AG04450 (cell line): ENCODE measurements at regions of chr9 and their contacts with region 1.

Region 1: GRCh38 chr9:137578518-137579258 is at the start of gene DPH7:
- DNase-seq: peak; percentile 63
- H3K4me3 ChIP-seq: peak within 1 kb of the TSS; percentile 91
- H3K27ac ChIP-seq: peak within 1 kb of the TSS; percentile 75
- H3K27me3 ChIP-seq: no peaks in the 10 kb centered on the region
- CTCF ChIP-seq: peak; percentile 82
- polyA plus RNA-seq, gene DPH7: 19.5 and 21.9 TPM in 2 replicates

Region 2: DNA sequence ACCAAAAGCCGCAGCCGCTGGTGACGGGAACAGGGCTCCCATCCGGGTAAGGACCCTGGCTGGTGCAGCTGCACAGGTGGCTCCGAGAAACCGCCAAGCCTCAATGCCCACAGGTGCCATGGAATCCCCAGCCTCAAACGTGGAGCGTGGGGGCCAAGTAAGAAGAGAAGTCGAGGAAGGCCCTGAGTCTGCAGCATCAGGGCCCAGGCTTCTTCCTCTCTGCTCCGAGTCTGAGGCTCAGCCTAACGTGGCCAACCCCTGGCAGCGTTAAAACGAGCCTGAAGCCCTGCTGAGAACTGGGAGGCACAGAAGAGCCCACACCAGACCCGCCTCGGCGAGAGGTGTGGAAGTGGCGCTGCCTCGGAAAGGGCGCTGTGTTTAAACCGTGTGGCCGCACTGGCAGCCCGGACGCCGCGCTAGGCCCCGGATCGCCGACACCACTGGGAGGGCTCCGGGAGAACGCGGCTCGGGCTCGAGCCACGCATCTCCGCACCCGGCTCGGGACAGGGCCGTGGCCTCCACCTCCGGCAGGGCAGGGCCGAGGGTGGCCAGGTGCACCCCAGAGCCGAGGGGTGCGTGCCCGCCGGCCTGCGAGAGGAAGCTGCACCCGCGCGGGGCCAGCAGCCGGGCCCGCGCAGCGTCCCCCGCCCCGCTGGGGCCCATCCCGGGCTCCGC is 10.9 kb after region 1 on chr9:
- CTCF ChIA-PET with region 1: interaction called, 37 read pairs
- POLR2A ChIA-PET with region 1: interaction called, 4 read pairs
- DNase-seq: no peak
- H3K4me3 ChIP-seq: peak overlapping the region; percentile 71
- H3K27ac ChIP-seq: no peak overlapping the region
- H3K27me3 ChIP-seq: no peaks in the 10 kb centered on the region
- CTCF ChIP-seq: no peak